ENCODE measurements at regions of chr5 and their contacts with region 1.

Region 1: DNA sequence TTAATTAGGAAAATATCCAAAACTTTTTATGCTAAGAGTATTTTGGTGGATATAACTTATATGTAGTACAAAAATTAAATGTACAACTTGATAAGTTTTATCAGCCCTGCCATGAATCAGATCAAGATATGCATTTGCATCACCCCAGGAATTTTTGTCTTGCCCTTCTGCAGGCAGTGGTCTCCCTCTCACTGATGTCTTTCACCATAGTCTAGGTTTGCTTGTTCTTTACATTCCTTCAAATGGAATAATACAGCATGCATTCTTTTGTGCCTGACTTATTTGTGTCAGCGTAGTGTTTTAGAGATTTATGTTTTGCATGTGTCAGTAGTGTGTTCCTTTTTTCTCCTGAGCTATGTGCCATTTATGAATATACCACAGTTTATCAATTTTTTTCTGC is 36.4 kb downstream of the RNF180 start:
- DNase-seq: no peak
- H3K4me3 ChIP-seq: no peak overlapping the region
- H3K27ac ChIP-seq: no peak overlapping the region
- H3K4me1 ChIP-seq: peaks cover 0 to 52% (median 2%) of the 10 kb centered on the region in 4 donors
- H3K27me3 ChIP-seq: no peaks in the 10 kb centered on the region
- CTCF ChIP-seq: no peak

Region 2: DNA sequence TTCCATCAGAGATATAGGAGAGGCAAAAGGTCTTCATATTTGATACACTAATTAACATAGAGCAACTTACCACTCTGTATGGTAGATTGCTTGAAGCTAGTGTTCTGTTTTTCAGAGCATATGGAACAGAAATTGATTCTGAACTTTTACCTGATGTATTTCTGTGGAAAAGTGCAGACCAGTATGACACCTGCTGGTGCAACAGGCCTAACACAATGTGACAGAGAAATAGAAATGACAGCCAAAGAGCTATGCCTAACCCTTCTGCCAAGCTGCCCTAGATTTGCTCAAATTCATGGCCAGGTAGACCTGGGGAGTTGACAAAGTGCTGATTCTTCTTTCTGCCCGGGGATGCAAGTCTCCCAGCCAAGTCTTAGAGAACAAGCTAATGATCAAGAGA is 101.8 kb before region 1 on chr5:
- intact Hi-C with region 1: no loop called
- DNase-seq: no peak
- H3K4me3 ChIP-seq: no peak overlapping the region
- H3K27ac ChIP-seq: no peak overlapping the region
- H3K4me1 ChIP-seq: no peaks in the 10 kb centered on the region
- H3K27me3 ChIP-seq: no peaks in the 10 kb centered on the region
- CTCF ChIP-seq: no peak

Region 3: GRCh38 chr5:64158827-64159226 is 43.2 kb before region 1 on chr5:
- intact Hi-C with region 1: loop called (anchors 5 kb)
- DNase-seq: no peak
- H3K4me3 ChIP-seq: no peak overlapping the region
- H3K27ac ChIP-seq: peak overlapping the region in 1 of 2 donors; percentile 17
- H3K4me1 ChIP-seq: peaks cover 0 to 59% (median 11%) of the 10 kb centered on the region in 4 donors
- H3K27me3 ChIP-seq: no peaks in the 10 kb centered on the region
- CTCF ChIP-seq: no peak